CD4-positive, alpha-beta memory T cell (primary cell): ENCODE measurements at regions of chr19 and their contacts with region 1.

Region 1: GRCh38 chr19:43575156-43575950 is at the starts of genes PINLYP and XRCC1:
- DNase-seq: peak; percentile 95 to 99 (median 98)
- H3K4me3 ChIP-seq: peak within 1 kb of the TSS; percentile 79 to 100
- H3K4me3 Mint-ChIP-seq: peak within 1 kb of the TSS; percentile 93 to 99 (median 96)
- H3K27ac ChIP-seq: peak within 1 kb of the TSS; percentile 99
- H3K27ac Mint-ChIP-seq: peak within 1 kb of the TSS; percentile 98 to 99 (median 99)
- H3K4me1 ChIP-seq: peaks cover 23% of the 10 kb centered on the region
- H3K4me1 Mint-ChIP-seq: peaks cover 15 to 74% (median 38%) of the 10 kb centered on the region in 4 donors
- H3K27me3 ChIP-seq: no peaks in the 10 kb centered on the region
- H3K27me3 Mint-ChIP-seq: peaks cover 0 to 2% of the 10 kb centered on the region in 2 donors
- total RNA-seq, gene PINLYP: 0.33 to 0.84 TPM
- total RNA-seq, gene XRCC1: 33.4 to 41.0 TPM

Region 2: DNA sequence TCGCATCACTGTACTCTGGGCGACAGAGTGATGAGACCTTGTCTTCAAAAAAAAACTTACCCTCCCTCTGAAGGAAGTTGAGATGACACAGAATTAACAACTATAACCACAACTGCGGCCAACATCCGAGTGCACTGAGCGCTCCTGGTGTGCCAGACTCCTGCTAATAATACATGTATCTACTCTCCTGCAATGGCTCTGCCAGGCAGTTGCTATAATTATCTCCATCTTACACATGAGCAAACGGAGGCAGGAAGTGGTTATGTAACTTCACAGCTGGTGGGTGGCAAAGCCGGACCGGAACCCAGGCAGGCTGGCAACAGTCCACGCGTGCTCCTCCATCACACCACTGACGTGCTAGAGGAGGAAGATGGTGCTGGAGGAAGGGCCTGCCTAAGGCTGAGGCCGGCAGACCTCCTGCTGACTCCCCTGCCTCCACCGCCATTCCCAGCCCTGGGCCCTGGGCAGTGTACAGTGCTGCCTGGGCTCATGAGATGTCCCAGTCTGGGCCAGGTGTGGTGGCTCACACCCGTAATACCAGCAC is 12.6 kb before region 1 on chr19:
- CTCF ChIA-PET with region 1: interaction called, 31 read pairs
- POLR2A ChIA-PET with region 1: interaction called, 25 read pairs
- intact Hi-C with region 1: loop called (anchors 1 kb)
- DNase-seq: peak; percentile 82 to 93 (median 86)
- H3K4me3 ChIP-seq: peak overlapping the region in 1 of 2 donors; percentile 32
- H3K4me3 Mint-ChIP-seq: peak overlapping the region; percentile 63 to 86 (median 74)
- H3K27ac ChIP-seq: peak overlapping the region; percentile 72
- H3K27ac Mint-ChIP-seq: peak overlapping the region; percentile 92 to 98 (median 96)
- H3K4me1 ChIP-seq: peaks cover 45% of the 10 kb centered on the region
- H3K4me1 Mint-ChIP-seq: peaks cover 36 to 65% (median 43%) of the 10 kb centered on the region in 4 donors
- H3K27me3 ChIP-seq: no peaks in the 10 kb centered on the region
- H3K27me3 Mint-ChIP-seq: no peaks in the 10 kb centered on the region

Region 3: DNA sequence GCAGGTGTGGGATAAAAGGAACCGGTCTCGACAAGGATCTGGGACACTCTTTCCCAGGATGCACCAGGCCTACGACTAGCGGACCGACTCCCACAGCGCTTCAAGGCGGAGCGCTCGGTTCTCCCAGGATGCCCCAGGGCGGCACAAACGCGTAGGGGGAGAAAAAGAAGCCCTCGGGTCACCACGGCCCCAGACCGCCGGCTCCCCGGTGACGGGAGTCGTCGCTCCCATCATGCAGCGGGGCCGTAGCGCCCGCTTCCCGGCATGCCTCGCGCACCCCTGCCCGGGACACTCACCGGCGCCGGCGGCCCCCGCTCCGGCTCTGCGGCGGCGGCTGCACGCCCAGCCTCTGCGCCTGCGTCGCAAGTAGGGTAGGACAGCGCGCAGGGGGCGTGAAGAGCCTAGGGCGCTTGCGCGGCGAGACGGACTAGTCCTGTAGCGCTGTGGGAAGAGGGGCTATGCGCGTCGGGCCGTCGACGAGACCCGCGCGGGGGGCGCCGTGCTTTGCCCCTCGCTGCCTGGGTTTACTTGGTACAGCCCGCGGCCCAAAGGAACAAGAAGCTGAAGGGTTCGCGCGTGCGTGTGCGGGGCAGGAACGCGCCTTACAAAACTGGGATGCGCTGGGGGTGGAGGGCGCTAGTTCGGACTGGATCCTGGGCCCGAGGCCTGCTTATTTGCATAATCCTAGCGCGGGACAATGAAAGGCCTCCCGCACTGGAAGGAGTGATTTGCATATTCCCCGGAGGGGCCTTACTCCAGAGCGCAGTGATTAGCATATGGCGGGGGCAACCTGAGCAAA is 44.1 kb after region 1 on chr19 and contains the start of gene ZNF428:
- CTCF ChIA-PET with region 1: no interaction called
- POLR2A ChIA-PET with region 1: interaction called, 8 read pairs
- intact Hi-C with region 1: loop called (anchors 1 kb)
- DNase-seq: peak; percentile 85 to 88 (median 88)
- H3K4me3 ChIP-seq: peak within 1 kb of the TSS; percentile 90 to 97
- H3K4me3 Mint-ChIP-seq: peak within 1 kb of the TSS; percentile 96 to 98 (median 98)
- H3K27ac ChIP-seq: peak within 1 kb of the TSS; percentile 77
- H3K27ac Mint-ChIP-seq: peak within 1 kb of the TSS; percentile 95 to 99 (median 98)
- H3K4me1 ChIP-seq: peaks cover 29% of the 10 kb centered on the region
- H3K4me1 Mint-ChIP-seq: peaks cover 11 to 40% (median 27%) of the 10 kb centered on the region in 4 donors
- H3K27me3 ChIP-seq: no peaks in the 10 kb centered on the region
- H3K27me3 Mint-ChIP-seq: no peaks in the 10 kb centered on the region
- total RNA-seq, gene ZNF428: 27.7 to 28.2 TPM